ENCODE measurements at regions of chr1 and their contacts with region 1.

Region 1: GRCh38 chr1:115595279-115596079 is 46.3 kb upstream of the VANGL1 start:
- H3K4me3 ChIP-seq: no peak overlapping the region
- H3K27ac ChIP-seq: no peak overlapping the region
- H3K4me1 ChIP-seq: no peaks in the 10 kb centered on the region
- CTCF ChIP-seq: peak; percentile 84

Region 2: DNA sequence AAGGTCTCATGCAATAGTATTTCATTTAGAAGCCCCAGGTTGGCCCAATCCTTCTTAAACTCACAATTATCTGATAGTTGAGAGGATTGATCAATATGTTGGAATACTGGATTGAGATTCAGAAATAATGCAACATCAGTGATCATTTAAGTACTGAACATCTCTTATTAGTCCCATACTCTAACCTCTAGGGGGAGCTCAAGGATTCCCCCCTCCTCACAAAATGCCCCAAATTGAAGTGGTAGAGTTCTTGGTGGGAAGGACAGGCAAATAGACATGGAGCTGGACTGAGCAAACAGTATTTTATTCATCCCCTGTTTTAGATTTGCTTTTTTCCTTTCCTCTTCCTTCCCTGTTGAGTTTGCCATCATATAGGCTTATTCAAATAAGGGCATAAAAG is 320.3 kb before region 1 on chr1:
- CTCF ChIA-PET with region 1: interaction called, 12 read pairs
- POLR2A ChIA-PET with region 1: no interaction called
- H3K4me3 ChIP-seq: no peak overlapping the region
- H3K27ac ChIP-seq: no peak overlapping the region
- H3K4me1 ChIP-seq: no peaks in the 10 kb centered on the region
- CTCF ChIP-seq: no peak

Region 3: DNA sequence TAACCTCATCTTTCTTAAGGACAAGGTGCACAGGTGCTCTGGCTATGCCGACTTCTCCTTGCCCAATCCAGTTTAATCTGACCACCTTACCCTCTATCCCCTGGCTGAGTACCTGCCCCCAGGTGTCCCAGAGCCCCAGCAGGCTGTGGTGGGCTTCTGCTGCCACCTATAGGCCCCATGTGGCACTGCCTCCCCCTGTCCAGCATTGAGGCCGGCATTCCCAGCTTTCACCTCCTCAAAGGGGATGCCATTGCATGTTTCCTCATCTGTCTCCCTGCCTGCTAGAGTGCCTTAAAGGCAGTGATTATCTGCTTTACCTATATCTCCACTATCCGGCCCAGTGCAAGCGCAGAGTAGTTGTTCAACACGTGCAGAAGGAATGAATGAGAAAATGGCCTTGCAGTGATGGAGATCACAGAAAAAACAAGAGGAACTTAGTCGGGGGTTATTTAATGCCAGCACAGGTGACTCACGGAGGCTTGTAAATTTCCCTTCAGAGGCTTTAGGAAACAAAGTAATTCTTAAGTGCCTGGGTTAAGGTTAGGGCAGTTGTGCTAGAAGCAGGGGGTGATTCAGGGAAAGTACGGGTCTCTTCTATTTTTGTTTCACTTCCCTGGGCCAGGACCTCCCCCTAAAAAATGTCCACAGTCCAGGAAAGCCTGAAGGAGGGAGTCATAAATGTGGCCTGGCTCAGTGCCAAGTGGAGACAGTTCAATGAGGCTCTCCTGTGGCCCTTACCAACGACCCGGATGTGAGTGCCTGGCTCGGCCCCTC is 125.6 kb before region 1 on chr1:
- CTCF ChIA-PET with region 1: interaction called, 16 read pairs
- POLR2A ChIA-PET with region 1: no interaction called
- H3K4me3 ChIP-seq: no peak overlapping the region
- H3K27ac ChIP-seq: no peak overlapping the region
- H3K4me1 ChIP-seq: no peaks in the 10 kb centered on the region
- CTCF ChIP-seq: peak; percentile 86

Region 4: DNA sequence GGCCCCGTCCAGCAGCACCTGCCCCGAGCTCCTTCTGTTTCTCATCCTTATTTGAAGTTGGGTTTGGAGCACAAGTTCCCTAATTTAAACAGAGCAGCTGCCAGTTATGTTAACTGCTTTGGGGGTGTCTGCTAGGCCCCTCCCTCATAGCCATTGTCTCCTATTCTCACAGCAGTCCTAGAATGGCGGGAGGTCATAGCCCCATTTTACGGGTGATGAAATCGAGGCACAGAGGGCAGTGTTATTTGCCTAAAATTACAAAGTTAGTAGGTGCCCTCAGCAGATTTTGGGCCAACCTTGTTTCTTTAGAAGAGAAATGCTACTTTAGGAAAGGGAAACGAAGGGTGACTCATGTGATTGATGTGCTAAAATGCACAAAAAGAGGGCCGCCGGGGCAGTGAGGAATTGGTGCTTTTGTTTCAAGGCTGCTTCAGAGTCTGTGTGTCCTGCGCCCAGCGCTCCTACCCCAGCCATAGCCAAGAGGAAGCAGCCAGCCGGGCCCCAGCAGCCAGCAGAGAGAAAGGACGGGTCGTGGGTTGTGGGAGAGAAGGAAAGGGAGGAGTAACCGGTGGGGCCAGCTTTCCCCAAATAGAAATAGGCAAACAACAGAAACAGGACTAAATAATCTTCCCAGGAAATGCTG is 59.3 kb after region 1 on chr1:
- CTCF ChIA-PET with region 1: no interaction called
- POLR2A ChIA-PET with region 1: no interaction called
- H3K4me3 ChIP-seq: no peak overlapping the region
- H3K27ac ChIP-seq: no peak overlapping the region
- H3K4me1 ChIP-seq: peaks cover 14% of the 10 kb centered on the region
- CTCF ChIP-seq: no peak

Region 5: GRCh38 chr1:115764541-115764940 is 169.1 kb after region 1 on chr1:
- CTCF ChIA-PET with region 1: interaction called, 13 read pairs
- POLR2A ChIA-PET with region 1: no interaction called
- H3K4me3 ChIP-seq: no peak overlapping the region
- H3K27ac ChIP-seq: no peak overlapping the region
- H3K4me1 ChIP-seq: no peaks in the 10 kb centered on the region
- CTCF ChIP-seq: 0 out of 2 replicates have a peak, but pooled peaks have one; percentile 30

Measured in HEK293 (cell line).